ENCODE measurements at regions of chr19 and their contacts with region 1.

Region 1: GRCh38 chr19:48340995-48341394 is 15.6 kb downstream of the EMP3 start:
- DNase-seq: peak; percentile 24
- H3K4me3 ChIP-seq: no peak overlapping the region
- H3K27ac ChIP-seq: no peak overlapping the region
- H3K4me1 ChIP-seq: no peaks in the 10 kb centered on the region
- H3K27me3 ChIP-seq: no peaks in the 10 kb centered on the region
- CTCF ChIP-seq: no peak
- EP300 ChIP-seq: no peak
- RAD21 ChIP-seq: no peak

Region 2: GRCh38 chr19:48351341-48351752 is 10.4 kb after region 1 on chr19:
- CTCF ChIA-PET with region 1: interaction called, 14 read pairs
- POLR2A ChIA-PET with region 1: no interaction called
- DNase-seq: peak; percentile 86
- H3K4me3 ChIP-seq: peak overlapping the region in 1 of 2 experiments; percentile 6; a peak in 1 of 4 replicates
- H3K27ac ChIP-seq: no peak overlapping the region
- H3K4me1 ChIP-seq: peaks cover 0 to 2% of the 10 kb centered on the region in 2 experiments; a peak in 1 of 4 replicates
- H3K27me3 ChIP-seq: no peaks in the 10 kb centered on the region
- CTCF ChIP-seq: peak; percentile 82
- EP300 ChIP-seq: no peak
- RAD21 ChIP-seq: peak; percentile 67

Region 3: GRCh38 chr19:48770260-48770659 is 429.3 kb after region 1 on chr19:
- CTCF ChIA-PET with region 1: no interaction called
- POLR2A ChIA-PET with region 1: no interaction called
- DNase-seq: no peak
- H3K4me3 ChIP-seq: no peak overlapping the region
- H3K27ac ChIP-seq: no peak overlapping the region
- H3K4me1 ChIP-seq: no peaks in the 10 kb centered on the region
- H3K27me3 ChIP-seq: peaks cover 18% of the 10 kb centered on the region
- CTCF ChIP-seq: no peak
- EP300 ChIP-seq: no peak
- RAD21 ChIP-seq: no peak